HepG2 (cell line): ENCODE measurements at regions of chr9 and their contacts with region 1.

Region 1: GRCh38 chr9:81256368-81256767 is 433.0 kb downstream of the TLE1 start:
- DNase-seq: no peak
- ATAC-seq: no peak
- H3K4me3 ChIP-seq: no peak overlapping the region
- H3K27ac ChIP-seq: no peak overlapping the region
- H3K4me1 ChIP-seq: no peaks in the 10 kb centered on the region
- H3K27me3 ChIP-seq: 0 out of 5 replicates have a peak, but pooled peaks cover 0 to 7% of the 10 kb centered on the region in 2 experiments
- CTCF ChIP-seq: no peak
- EP300 ChIP-seq: no peak
- POLR2A ChIP-seq: no peak
- RAD21 ChIP-seq: no peak

Region 2: DNA sequence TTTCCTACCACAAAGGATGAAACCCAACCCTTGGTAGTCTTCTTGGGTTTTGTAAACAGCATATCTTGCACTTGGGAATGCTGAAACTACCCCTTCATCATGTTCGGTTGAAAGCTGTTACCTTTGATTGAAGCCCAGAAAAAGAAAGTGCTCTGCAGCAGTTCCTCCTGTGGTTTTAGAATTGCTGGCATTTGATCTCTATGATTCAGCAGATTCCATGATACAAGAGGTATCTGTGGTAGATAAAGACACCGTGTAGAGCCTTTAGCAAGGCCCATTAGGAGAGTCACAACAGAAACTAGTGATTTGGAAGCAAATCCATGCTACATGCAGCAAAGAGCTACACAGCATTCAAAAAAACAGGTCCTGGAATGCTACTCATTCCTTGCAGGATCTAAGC is 124.0 kb before region 1 on chr9:
- CTCF ChIA-PET with region 1: no interaction called
- POLR2A ChIA-PET with region 1: no interaction called
- in situ Hi-C with region 1: no loop called
- intact Hi-C with region 1: no loop called
- DNase-seq: no peak
- ATAC-seq: no peak
- H3K4me3 ChIP-seq: no peak overlapping the region
- H3K27ac ChIP-seq: no peak overlapping the region
- H3K4me1 ChIP-seq: no peaks in the 10 kb centered on the region
- H3K27me3 ChIP-seq: no peaks in the 10 kb centered on the region
- CTCF ChIP-seq: no peak
- EP300 ChIP-seq: no peak
- POLR2A ChIP-seq: no peak
- RAD21 ChIP-seq: no peak

Region 3: DNA sequence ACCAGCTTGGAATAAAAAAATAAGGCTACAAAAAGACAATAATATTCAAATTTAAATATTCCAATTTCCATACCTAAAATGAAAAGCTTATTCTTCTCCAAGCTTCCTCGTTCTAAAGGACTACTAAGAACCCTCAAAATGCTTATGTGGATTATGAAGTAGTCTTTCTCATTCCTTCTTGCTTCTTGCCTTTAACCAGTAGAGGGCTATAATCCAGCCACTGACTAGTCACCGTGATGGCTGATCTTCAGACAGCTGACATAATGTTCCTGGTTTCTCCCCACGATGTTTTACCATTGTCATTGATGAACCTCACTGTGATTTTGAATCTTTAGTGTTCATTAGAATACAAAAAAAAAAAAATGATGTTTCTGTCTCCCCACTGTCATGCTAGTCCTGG is 82.3 kb before region 1 on chr9:
- CTCF ChIA-PET with region 1: no interaction called
- POLR2A ChIA-PET with region 1: no interaction called
- in situ Hi-C with region 1: no loop called
- intact Hi-C with region 1: no loop called
- DNase-seq: peak; percentile 7
- ATAC-seq: no peak
- H3K4me3 ChIP-seq: no peak overlapping the region
- H3K27ac ChIP-seq: no peak overlapping the region
- H3K4me1 ChIP-seq: no peaks in the 10 kb centered on the region
- H3K27me3 ChIP-seq: no peaks in the 10 kb centered on the region; a peak in 1 of 5 replicates
- CTCF ChIP-seq: no peak
- EP300 ChIP-seq: no peak
- POLR2A ChIP-seq: no peak
- RAD21 ChIP-seq: no peak

Region 4: DNA sequence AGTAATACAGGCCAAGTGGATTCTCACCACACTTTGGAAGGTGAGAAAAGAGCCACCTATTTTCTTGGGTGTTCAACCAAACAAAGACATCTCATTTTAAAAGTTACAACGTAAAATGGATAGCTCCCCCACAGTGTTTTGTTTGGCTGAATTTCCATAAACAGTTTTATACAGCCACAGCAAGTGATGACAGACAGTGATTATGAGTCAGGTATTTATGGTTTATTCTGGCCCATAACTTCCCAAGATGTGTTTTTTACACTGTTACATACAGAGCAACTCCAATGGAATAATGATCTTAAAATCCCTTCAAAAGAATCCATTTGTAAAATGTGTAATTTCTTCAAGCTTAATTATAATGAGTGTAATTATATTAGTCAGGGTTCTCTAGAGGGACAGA is 11.7 kb after region 1 on chr9:
- CTCF ChIA-PET with region 1: no interaction called
- POLR2A ChIA-PET with region 1: no interaction called
- in situ Hi-C with region 1: no loop called
- intact Hi-C with region 1: loop called (anchors 1 kb)
- DNase-seq: no peak
- ATAC-seq: no peak
- H3K4me3 ChIP-seq: no peak overlapping the region
- H3K27ac ChIP-seq: no peak overlapping the region
- H3K4me1 ChIP-seq: no peaks in the 10 kb centered on the region
- H3K27me3 ChIP-seq: no peaks in the 10 kb centered on the region
- CTCF ChIP-seq: no peak
- EP300 ChIP-seq: no peak
- POLR2A ChIP-seq: no peak
- RAD21 ChIP-seq: no peak